ENCODE measurements at regions of chr3 and their contacts with region 1.

Region 1: DNA sequence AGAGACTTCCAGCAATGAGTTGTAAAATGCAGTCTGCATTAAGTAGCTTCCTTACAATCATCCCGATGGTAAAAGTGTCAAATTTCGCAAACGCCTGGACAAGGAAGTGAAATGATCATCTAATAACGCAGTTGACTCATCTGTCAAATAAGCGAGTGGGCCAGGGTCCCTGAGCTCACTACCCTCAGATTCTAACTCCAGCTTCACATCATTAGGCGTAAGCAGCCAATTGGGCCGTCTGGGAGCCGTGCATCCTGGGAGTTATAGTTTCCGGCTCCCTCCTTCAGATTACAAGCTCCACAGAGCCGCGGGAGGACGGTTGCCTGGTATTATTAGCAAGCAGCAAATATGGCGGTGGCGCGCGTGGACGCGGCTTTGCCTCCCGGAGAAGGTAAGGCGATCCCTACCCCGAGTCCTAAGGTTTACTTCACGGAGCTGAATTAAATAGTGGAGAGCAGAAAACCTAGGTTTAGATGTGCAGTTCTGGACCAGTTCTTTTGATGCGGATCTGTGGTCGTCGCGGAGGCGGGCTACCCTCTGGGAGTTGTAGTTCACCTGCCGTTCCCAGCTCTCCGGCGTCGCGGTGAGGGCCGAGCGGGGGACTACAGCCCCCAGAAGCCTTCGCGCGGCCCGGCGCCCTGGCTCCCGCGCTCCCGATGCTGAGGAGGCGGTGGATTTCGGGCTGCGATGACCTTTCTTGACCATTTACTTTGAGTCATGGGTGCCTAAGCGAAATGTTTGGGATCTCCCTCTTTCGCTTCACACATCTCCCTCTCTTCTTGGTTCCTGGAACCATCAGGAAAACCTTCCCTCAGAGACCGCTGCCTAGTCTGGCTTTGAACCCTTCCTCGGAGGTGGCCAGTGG is at the start of gene CEP97:
- DNase-seq: peak; percentile 70 to 90 (median 88)
- ATAC-seq: peak; percentile 98
- H3K4me3 ChIP-seq: peak within 1 kb of the TSS; percentile 91
- H3K4me3 Mint-ChIP-seq: peak within 1 kb of the TSS; percentile 88 to 100 (median 98)
- H3K27ac ChIP-seq: peak within 1 kb of the TSS; percentile 82
- H3K27ac Mint-ChIP-seq: peak within 1 kb of the TSS; percentile 91 to 98 (median 97)
- H3K4me1 ChIP-seq: peaks cover 25 to 30% of the 10 kb centered on the region in 2 donors
- H3K4me1 Mint-ChIP-seq: peaks cover 26 to 57% (median 44%) of the 10 kb centered on the region in 7 donors
- H3K27me3 ChIP-seq: no peaks in the 10 kb centered on the region
- H3K27me3 Mint-ChIP-seq: no peaks in the 10 kb centered on the region
- total RNA-seq, gene CEP97: 5.5 to 21.7 (median 10.9) TPM

Region 2: GRCh38 chr3:99817437-99818240 is 1906.9 kb before region 1 on chr3 and contains the start of gene CMSS1:
- CTCF ChIA-PET with region 1: no interaction called
- POLR2A ChIA-PET with region 1: no interaction called
- intact Hi-C with region 1: loop called in 1 of 2 experiments (anchors 1 kb)
- DNase-seq: peak; percentile 96 to 98 (median 97)
- ATAC-seq: peak; percentile 94
- H3K4me3 ChIP-seq: peak within 1 kb of the TSS; percentile 80
- H3K4me3 Mint-ChIP-seq: peak within 1 kb of the TSS; percentile 84 to 99 (median 95)
- H3K27ac ChIP-seq: peak within 1 kb of the TSS; percentile 90
- H3K27ac Mint-ChIP-seq: peak within 1 kb of the TSS; percentile 93 to 100 (median 100)
- H3K4me1 ChIP-seq: peaks cover 18 to 22% of the 10 kb centered on the region in 2 donors
- H3K4me1 Mint-ChIP-seq: peaks cover 19 to 62% (median 41%) of the 10 kb centered on the region in 7 donors
- H3K27me3 ChIP-seq: no peaks in the 10 kb centered on the region
- H3K27me3 Mint-ChIP-seq: no peaks in the 10 kb centered on the region
- total RNA-seq, gene CMSS1: 14.9 to 47.7 (median 18.2) TPM

Region 3: DNA sequence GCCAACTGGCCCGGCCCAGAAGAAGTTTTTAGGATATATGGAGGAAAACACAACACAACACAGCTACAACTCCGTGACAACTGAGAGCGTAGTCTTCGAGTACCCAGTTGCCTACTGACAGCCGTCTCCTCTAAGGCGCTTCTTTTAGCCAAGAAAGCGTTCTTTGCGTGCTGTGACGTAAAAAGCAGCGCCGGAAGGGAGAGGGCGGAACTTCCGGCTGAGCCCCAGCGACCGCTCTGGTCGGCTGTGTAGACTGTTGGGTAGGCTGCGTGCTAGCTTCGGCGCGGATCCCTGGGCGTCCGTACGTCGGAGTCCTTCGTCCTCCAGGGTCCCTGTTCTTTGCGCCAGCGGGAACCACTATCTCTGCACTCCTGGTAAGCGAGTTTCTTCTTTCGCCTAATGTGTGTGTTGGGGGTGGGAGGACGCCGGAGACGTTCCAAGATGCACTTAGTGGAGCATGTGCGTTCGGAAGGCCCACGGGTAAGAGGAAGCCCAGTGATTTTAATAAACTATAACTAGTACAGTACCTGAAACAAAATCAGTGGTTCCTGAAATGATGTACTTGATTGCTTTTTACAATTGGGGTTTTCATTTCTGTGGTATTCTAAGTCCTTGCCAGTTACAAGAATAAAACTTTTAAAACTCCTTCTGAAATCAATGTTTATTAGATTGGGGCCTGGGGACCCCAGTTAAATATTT is 162.8 kb before region 1 on chr3 and contains the start of gene TRMT10C:
- CTCF ChIA-PET with region 1: no interaction called
- POLR2A ChIA-PET with region 1: no interaction called
- intact Hi-C with region 1: loop called in 1 of 2 experiments (anchors 1 kb)
- DNase-seq: peak; percentile 77 to 94 (median 91)
- ATAC-seq: peak; percentile 98
- H3K4me3 ChIP-seq: peak within 1 kb of the TSS; percentile 94
- H3K4me3 Mint-ChIP-seq: peak within 1 kb of the TSS; percentile 95 to 99 (median 99)
- H3K27ac ChIP-seq: peak within 1 kb of the TSS; percentile 93
- H3K27ac Mint-ChIP-seq: peak within 1 kb of the TSS; percentile 93 to 99 (median 98)
- H3K4me1 ChIP-seq: peaks cover 8 to 14% of the 10 kb centered on the region in 2 donors
- H3K4me1 Mint-ChIP-seq: peaks cover 19 to 48% (median 38%) of the 10 kb centered on the region in 7 donors
- H3K27me3 ChIP-seq: no peaks in the 10 kb centered on the region
- H3K27me3 Mint-ChIP-seq: peaks cover 2 to 10% (median 3%) of the 10 kb centered on the region in 5 donors
- total RNA-seq, gene TRMT10C: 24.1 to 32.7 (median 27.1) TPM

Region 4: GRCh38 chr3:101625879-101626278 is 98.7 kb before region 1 on chr3:
- CTCF ChIA-PET with region 1: no interaction called
- POLR2A ChIA-PET with region 1: no interaction called
- intact Hi-C with region 1: no loop called
- DNase-seq: no peak
- ATAC-seq: no peak
- H3K4me3 ChIP-seq: no peak overlapping the region
- H3K4me3 Mint-ChIP-seq: no peak overlapping the region
- H3K27ac ChIP-seq: no peak overlapping the region
- H3K27ac Mint-ChIP-seq: peak overlapping the region in 1 of 9 donors; percentile 30
- H3K4me1 ChIP-seq: no peaks in the 10 kb centered on the region
- H3K4me1 Mint-ChIP-seq: no peaks in the 10 kb centered on the region
- H3K27me3 ChIP-seq: no peaks in the 10 kb centered on the region
- H3K27me3 Mint-ChIP-seq: no peaks in the 10 kb centered on the region

Region 5: DNA sequence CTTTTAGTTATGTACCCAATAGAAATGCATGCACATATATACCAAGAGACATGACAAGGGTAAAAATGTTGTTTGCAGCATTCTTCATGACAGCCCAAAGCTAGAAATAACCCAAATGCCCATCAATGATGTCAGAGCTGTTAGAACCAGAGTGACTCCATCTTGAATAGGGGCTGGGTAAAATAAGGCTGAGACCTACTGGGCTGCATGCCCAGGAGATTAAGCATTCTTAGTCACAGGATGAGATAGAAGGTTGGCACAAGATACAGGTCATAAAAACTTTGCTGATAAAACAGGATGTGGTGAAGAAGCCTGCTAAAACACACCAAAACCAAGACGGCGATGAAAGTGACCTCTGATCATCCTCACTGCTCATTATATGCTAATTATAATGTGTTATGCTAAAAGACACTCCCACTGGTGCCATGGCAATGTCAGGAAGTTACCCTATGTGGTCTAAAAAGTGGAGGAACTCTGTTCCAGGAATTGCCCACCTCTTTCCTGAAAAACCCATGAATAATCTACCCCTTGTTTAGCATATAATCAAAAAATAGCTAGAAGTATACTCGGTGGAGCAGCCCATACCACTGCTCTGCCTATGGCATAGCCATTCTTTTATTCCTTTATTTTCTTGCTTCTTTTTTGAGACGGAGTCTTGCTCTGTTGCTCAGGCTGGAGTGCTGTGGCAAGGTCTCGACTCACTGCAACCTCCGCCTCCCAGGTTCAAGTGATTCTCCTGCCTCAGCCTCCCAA is 80.5 kb before region 1 on chr3:
- CTCF ChIA-PET with region 1: no interaction called
- POLR2A ChIA-PET with region 1: no interaction called
- intact Hi-C with region 1: no loop called
- DNase-seq: peak in 7 of 9 donors; percentile 22 to 64 (median 50)
- ATAC-seq: peak; percentile 80
- H3K4me3 ChIP-seq: no peak overlapping the region
- H3K4me3 Mint-ChIP-seq: peak overlapping the region in 8 of 10 donors; percentile 7 to 43 (median 20)
- H3K27ac ChIP-seq: no peak overlapping the region
- H3K27ac Mint-ChIP-seq: peak overlapping the region; percentile 69 to 88 (median 77)
- H3K4me1 ChIP-seq: peaks cover 17 to 21% of the 10 kb centered on the region in 2 donors
- H3K4me1 Mint-ChIP-seq: peaks cover 15 to 33% (median 30%) of the 10 kb centered on the region in 7 donors
- H3K27me3 ChIP-seq: no peaks in the 10 kb centered on the region
- H3K27me3 Mint-ChIP-seq: no peaks in the 10 kb centered on the region

Region 6: DNA sequence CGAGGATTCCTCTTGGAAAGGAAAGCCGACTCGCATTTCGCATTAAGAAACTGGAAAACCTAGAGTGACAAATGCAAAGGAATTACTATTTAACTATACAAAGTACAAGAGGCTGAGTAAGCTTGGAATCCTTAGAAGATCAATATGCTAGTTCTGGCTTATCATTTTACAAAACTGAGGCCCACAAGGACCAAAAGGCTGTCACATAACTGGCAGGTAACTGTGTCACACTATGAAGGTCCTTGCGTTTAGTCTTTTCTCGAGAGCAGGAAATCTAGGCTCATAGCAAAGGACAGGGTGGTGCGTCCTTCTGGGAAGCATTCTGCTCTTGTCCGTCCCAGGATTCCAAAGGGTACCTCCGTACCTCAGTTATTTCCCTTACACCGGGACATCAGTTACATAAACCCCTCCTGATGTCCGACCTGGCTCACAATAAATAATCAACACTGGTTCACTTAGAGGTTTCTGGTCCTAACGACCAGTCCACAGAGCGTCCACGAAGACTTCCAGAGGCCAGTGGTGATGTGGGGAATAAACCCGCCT is 38.6 kb before region 1 on chr3:
- CTCF ChIA-PET with region 1: interaction called, 4 read pairs
- POLR2A ChIA-PET with region 1: interaction called, 34 read pairs
- intact Hi-C with region 1: loop called (anchors 1 kb)
- DNase-seq: peak in 2 of 9 donors; percentile 21 to 24
- ATAC-seq: peak; percentile 1
- H3K4me3 ChIP-seq: peak overlapping the region; percentile 72
- H3K4me3 Mint-ChIP-seq: peak overlapping the region; percentile 90 to 100 (median 98)
- H3K27ac ChIP-seq: peak overlapping the region; percentile 92
- H3K27ac Mint-ChIP-seq: peak overlapping the region; percentile 94 to 100 (median 99)
- H3K4me1 ChIP-seq: peaks cover 24 to 25% of the 10 kb centered on the region in 2 donors
- H3K4me1 Mint-ChIP-seq: peaks cover 20 to 58% (median 41%) of the 10 kb centered on the region in 7 donors
- H3K27me3 ChIP-seq: no peaks in the 10 kb centered on the region
- H3K27me3 Mint-ChIP-seq: no peaks in the 10 kb centered on the region

Region 7: GRCh38 chr3:101703169-101703568 is 21.4 kb before region 1 on chr3:
- CTCF ChIA-PET with region 1: no interaction called
- POLR2A ChIA-PET with region 1: no interaction called
- intact Hi-C with region 1: loop called in 1 of 2 experiments (anchors 2 kb)
- DNase-seq: no peak
- ATAC-seq: no peak
- H3K4me3 ChIP-seq: no peak overlapping the region
- H3K4me3 Mint-ChIP-seq: no peak overlapping the region
- H3K27ac ChIP-seq: no peak overlapping the region
- H3K27ac Mint-ChIP-seq: no peak overlapping the region
- H3K4me1 ChIP-seq: no peaks in the 10 kb centered on the region
- H3K4me1 Mint-ChIP-seq: no peaks in the 10 kb centered on the region
- H3K27me3 ChIP-seq: no peaks in the 10 kb centered on the region
- H3K27me3 Mint-ChIP-seq: no peaks in the 10 kb centered on the region

Region 8: GRCh38 chr3:101784855-101785613 is 60.5 kb after region 1 on chr3:
- CTCF ChIA-PET with region 1: interaction called, 3 read pairs
- POLR2A ChIA-PET with region 1: interaction called, 28 read pairs
- intact Hi-C with region 1: loop called in 1 of 2 experiments (anchors 1 kb)
- DNase-seq: peak in 7 of 9 donors; percentile 56 to 80 (median 74)
- ATAC-seq: peak; percentile 89
- H3K4me3 ChIP-seq: peak overlapping the region; percentile 50
- H3K4me3 Mint-ChIP-seq: peak overlapping the region; percentile 75 to 88 (median 83)
- H3K27ac ChIP-seq: peak overlapping the region; percentile 71
- H3K27ac Mint-ChIP-seq: peak overlapping the region; percentile 89 to 99 (median 96)
- H3K4me1 ChIP-seq: peaks cover 8 to 54% of the 10 kb centered on the region in 2 donors
- H3K4me1 Mint-ChIP-seq: peaks cover 56 to 86% (median 75%) of the 10 kb centered on the region in 7 donors
- H3K27me3 ChIP-seq: no peaks in the 10 kb centered on the region
- H3K27me3 Mint-ChIP-seq: no peaks in the 10 kb centered on the region

Region 9: GRCh38 chr3:101936419-101937356 is 212.1 kb after region 1 on chr3:
- CTCF ChIA-PET with region 1: no interaction called
- POLR2A ChIA-PET with region 1: interaction called, 4 read pairs
- intact Hi-C with region 1: loop called in 1 of 2 experiments (anchors 5 kb)
- DNase-seq: peak in 8 of 9 donors; percentile 34 to 68 (median 58)
- ATAC-seq: peak; percentile 90
- H3K4me3 ChIP-seq: peak overlapping the region; percentile 9
- H3K4me3 Mint-ChIP-seq: peak overlapping the region in 9 of 10 donors; percentile 44 to 77 (median 72)
- H3K27ac ChIP-seq: no peak overlapping the region
- H3K27ac Mint-ChIP-seq: peak overlapping the region; percentile 76 to 91 (median 87)
- H3K4me1 ChIP-seq: peaks cover 28 to 56% of the 10 kb centered on the region in 2 donors
- H3K4me1 Mint-ChIP-seq: peaks cover 15 to 43% (median 30%) of the 10 kb centered on the region in 7 donors
- H3K27me3 ChIP-seq: no peaks in the 10 kb centered on the region
- H3K27me3 Mint-ChIP-seq: peaks cover 0 to 27% (median 0%) of the 10 kb centered on the region in 5 donors

Region 10: DNA sequence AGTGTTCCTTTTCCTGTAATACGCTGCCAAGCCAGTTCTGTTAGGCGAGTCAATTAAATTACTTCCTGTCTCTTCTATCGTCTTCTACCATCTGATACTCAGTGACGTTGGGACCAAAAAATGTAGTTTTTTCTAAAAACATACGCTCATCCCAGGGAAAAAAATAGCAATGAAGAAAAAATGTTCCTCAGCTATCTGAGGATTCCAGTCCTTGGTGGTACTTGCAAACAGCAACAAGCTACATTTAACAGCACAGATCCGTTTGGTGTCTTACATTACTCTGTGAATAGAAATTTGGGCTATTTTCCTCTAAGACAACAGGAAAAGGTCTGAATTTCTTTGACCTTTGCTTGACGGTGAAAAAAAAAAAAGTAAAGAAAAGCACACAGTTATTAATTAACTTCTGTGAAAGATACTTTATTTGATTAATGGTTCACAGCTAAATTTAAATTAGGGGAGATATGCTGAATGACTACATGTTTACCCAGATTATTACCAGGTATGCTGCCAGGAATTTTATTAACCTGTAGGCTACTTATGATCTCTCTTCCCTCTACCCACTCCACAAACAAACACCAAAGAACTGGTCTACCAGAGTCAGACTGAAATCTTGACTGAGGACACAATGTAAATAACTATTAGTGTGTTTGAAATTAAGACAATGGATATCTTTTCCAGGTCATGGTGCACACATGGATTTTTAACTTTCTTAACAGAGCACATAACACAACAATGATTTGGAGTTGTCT is 455.9 kb after region 1 on chr3:
- CTCF ChIA-PET with region 1: no interaction called
- POLR2A ChIA-PET with region 1: no interaction called
- intact Hi-C with region 1: no loop called
- DNase-seq: peak in 6 of 9 donors; percentile 21 to 52 (median 40)
- ATAC-seq: peak; percentile 68
- H3K4me3 ChIP-seq: no peak overlapping the region
- H3K4me3 Mint-ChIP-seq: no peak overlapping the region
- H3K27ac ChIP-seq: peak overlapping the region; percentile 73
- H3K27ac Mint-ChIP-seq: no peak overlapping the region
- H3K4me1 ChIP-seq: peaks cover 0 to 18% of the 10 kb centered on the region in 2 donors
- H3K4me1 Mint-ChIP-seq: peaks cover 0 to 12% (median 5%) of the 10 kb centered on the region in 7 donors
- H3K27me3 ChIP-seq: no peaks in the 10 kb centered on the region
- H3K27me3 Mint-ChIP-seq: no peaks in the 10 kb centered on the region